Psoas muscle (tissue), 8 donors: ENCODE measurements at regions of chr18 and their contacts with region 1.

Region 1: DNA sequence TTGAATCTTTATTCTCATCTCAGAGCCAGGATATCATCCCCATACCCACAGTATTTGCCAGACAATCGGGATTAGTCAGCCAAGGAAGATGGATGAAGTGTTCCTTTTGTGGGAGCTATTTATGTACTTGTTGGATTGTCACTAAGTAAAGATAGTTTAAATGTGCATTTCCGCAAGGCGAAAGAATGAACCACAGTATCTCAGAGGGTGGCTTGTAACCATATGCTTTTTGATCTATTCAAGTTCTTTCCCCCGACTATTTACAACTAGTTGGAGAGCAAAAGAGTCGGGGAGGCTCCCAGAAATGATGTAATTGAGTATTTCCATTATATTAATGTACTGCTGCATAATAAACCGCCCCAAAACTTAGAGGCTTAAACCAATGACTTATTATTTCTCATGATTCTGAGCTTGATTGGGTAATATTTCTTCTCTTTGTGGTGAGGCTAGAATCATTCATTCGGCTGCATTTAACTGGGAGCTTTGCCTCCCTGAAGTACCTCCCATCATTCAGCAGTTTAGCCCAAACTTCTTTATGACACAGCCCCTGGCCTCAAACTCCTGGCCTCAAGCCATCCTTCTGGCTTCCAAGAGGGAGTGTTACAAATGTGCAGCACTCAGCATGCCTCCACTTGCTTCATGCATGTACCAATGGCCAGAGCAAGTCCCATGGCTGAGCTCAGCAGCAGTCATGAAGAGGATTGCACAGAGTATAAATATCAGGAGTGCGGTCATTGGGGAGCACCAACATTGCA is 423.7 kb downstream of the METTL4 start:
- DNase-seq: peak; percentile 60 to 73
- ATAC-seq: peak in 3 of 4 donors; percentile 53 to 69 (median 62)
- H3K4me3 ChIP-seq: no peak overlapping the region
- H3K27ac ChIP-seq: no peak overlapping the region
- H3K4me1 ChIP-seq: no peaks in the 10 kb centered on the region
- H3K27me3 ChIP-seq: no peaks in the 10 kb centered on the region
- CTCF ChIP-seq: no peak

Region 2: GRCh38 chr18:1906420-1906819 is 241.2 kb before region 1 on chr18:
- intact Hi-C with region 1: no loop called
- DNase-seq: no peak
- ATAC-seq: no peak
- H3K4me3 ChIP-seq: no peak overlapping the region
- H3K27ac ChIP-seq: no peak overlapping the region
- H3K4me1 ChIP-seq: no peaks in the 10 kb centered on the region
- H3K27me3 ChIP-seq: no peaks in the 10 kb centered on the region
- CTCF ChIP-seq: no peak

Region 3: DNA sequence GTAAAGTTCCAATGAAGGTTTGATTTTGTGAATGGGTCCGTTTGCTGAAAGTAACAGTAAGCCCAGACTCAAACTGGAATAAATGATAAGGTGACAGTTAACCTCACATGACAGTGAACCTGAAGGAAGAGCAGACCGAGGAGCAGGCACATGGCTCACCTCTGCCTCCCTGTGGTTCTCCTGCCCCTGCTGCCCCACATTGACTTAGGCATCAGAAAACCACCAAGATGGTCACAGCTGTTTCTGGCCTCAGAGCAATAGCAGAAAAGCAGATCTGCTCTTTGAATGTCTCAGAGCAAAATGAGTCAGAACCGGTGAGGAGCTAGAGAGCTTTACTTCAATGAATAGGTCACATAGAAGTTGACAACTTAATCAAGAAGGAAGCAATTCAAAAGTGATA is 64.0 kb before region 1 on chr18:
- intact Hi-C with region 1: loop called in 1 of 2 experiments (anchors 10 kb)
- DNase-seq: no peak
- ATAC-seq: no peak
- H3K4me3 ChIP-seq: no peak overlapping the region
- H3K27ac ChIP-seq: no peak overlapping the region
- H3K4me1 ChIP-seq: no peaks in the 10 kb centered on the region
- H3K27me3 ChIP-seq: no peaks in the 10 kb centered on the region
- CTCF ChIP-seq: no peak

Region 4: GRCh38 chr18:2218101-2218500 is 70.4 kb after region 1 on chr18:
- intact Hi-C with region 1: loop called in 1 of 2 experiments (anchors 10 kb)
- DNase-seq: no peak
- ATAC-seq: no peak
- H3K4me3 ChIP-seq: no peak overlapping the region
- H3K27ac ChIP-seq: no peak overlapping the region
- H3K4me1 ChIP-seq: no peaks in the 10 kb centered on the region
- H3K27me3 ChIP-seq: no peaks in the 10 kb centered on the region
- CTCF ChIP-seq: no peak